ENCODE measurements at regions of chr13 and their contacts with region 1.

Region 1: DNA sequence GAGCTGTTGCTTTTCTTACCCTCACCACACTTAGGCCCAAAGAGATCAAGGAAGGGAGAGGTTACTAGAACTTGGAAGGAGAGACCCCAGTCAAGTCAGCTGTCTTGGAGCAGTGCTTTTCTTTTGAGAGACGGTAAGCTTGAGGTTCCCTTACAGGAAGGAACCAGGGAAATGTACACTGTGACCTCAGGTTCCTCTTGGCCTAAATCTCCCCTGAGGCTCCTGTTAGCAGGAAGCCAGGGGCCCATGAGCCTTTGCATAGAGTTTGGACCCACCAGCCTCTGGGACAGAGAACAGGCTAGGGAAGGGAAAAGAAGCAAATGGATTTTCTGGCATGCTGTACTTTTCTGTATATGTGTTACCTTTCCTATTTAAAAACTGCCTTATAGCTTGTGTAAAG is 5.9 kb upstream of the GPR18 start:
- DNase-seq: no peak
- ATAC-seq: peak in 3 of 4 donors; percentile 20 to 35 (median 28)
- H3K4me3 ChIP-seq: no peak overlapping the region
- H3K27ac ChIP-seq: peak overlapping the region; percentile 71
- H3K4me1 ChIP-seq: peaks cover 42% of the 10 kb centered on the region
- H3K27me3 ChIP-seq: no peaks in the 10 kb centered on the region
- CTCF ChIP-seq: no peak

Region 2: GRCh38 chr13:99228737-99229691 is 35.0 kb before region 1 on chr13:
- intact Hi-C with region 1: loop called in 1 of 2 experiments (anchors 5 kb)
- DNase-seq: no peak
- ATAC-seq: peak; percentile 29 to 69 (median 41)
- H3K4me3 ChIP-seq: no peak overlapping the region
- H3K27ac ChIP-seq: peak overlapping the region; percentile 83
- H3K4me1 ChIP-seq: peaks cover 72% of the 10 kb centered on the region
- H3K27me3 ChIP-seq: no peaks in the 10 kb centered on the region
- CTCF ChIP-seq: no peak

Measured in psoas muscle (tissue), 8 donors.